CD4-positive, alpha-beta memory T cell (primary cell): ENCODE measurements at regions of chr22 and their contacts with region 1.

Region 1: DNA sequence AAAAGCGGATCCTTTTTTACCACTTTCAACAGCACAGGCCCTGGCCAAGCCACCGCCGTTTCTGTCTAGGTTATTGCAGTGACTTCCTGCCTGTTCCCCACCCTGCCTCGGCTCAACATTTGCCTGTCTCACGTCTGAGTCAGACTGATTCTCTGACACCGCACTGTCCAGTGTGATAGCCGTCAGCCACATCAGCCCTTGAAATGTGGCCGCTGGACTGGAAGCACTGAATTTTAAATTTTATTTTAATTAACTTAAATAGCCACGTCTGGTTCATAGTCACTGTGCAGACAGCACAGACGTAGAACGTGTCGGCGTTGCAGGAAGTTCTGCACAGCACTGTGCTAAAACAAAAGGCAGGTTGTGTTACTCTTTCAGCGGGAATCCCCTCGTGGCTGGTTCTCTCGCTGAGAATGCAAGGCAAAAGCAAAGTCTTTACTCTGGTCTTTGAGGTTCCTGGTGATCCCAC is 56.3 kb upstream of the ADSL start:
- DNase-seq: peak; percentile 69 to 89 (median 75)
- H3K4me3 ChIP-seq: no peak overlapping the region
- H3K4me3 Mint-ChIP-seq: peak overlapping the region; percentile 13 to 86 (median 78)
- H3K27ac ChIP-seq: peak overlapping the region; percentile 91
- H3K27ac Mint-ChIP-seq: peak overlapping the region; percentile 95 to 99 (median 97)
- H3K4me1 ChIP-seq: peaks cover 66% of the 10 kb centered on the region
- H3K4me1 Mint-ChIP-seq: peaks cover 43 to 73% (median 58%) of the 10 kb centered on the region in 4 donors
- H3K27me3 ChIP-seq: no peaks in the 10 kb centered on the region
- H3K27me3 Mint-ChIP-seq: no peaks in the 10 kb centered on the region

Region 2: DNA sequence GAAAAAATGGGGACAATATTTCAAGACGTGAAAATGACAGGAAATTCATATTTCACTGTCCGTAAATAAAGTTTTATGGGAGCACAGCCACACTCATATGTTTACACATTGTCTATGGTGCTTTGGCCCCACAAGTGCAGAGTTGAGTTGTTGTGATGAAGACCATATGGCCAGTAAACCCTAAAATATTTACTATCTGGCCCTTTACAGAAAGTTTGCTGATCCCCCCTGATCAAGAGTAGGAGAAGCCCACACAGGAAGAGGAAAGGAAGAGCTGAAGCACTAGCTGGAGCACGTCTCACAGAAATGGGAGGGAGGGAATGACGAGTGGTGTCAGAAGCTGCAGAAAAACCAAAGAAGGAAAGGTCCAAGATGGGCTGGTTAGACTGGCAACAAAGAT is 33.5 kb before region 1 on chr22:
- CTCF ChIA-PET with region 1: no interaction called
- POLR2A ChIA-PET with region 1: no interaction called
- intact Hi-C with region 1: no loop called
- DNase-seq: no peak
- H3K4me3 ChIP-seq: no peak overlapping the region
- H3K4me3 Mint-ChIP-seq: peak overlapping the region in 5 of 8 donors; percentile 1 to 66 (median 35)
- H3K27ac ChIP-seq: no peak overlapping the region
- H3K27ac Mint-ChIP-seq: peak overlapping the region; percentile 65 to 92 (median 86)
- H3K4me1 ChIP-seq: peaks cover 79% of the 10 kb centered on the region
- H3K4me1 Mint-ChIP-seq: peaks cover 57 to 78% (median 73%) of the 10 kb centered on the region in 4 donors
- H3K27me3 ChIP-seq: no peaks in the 10 kb centered on the region
- H3K27me3 Mint-ChIP-seq: no peaks in the 10 kb centered on the region

Region 3: GRCh38 chr22:40276996-40277823 is 12.8 kb before region 1 on chr22:
- CTCF ChIA-PET with region 1: no interaction called
- POLR2A ChIA-PET with region 1: interaction called, 15 read pairs
- intact Hi-C with region 1: loop called (anchors 2 kb)
- DNase-seq: no peak
- H3K4me3 ChIP-seq: no peak overlapping the region
- H3K4me3 Mint-ChIP-seq: peak overlapping the region in 4 of 8 donors; percentile 22 to 98 (median 30)
- H3K27ac ChIP-seq: peak overlapping the region; percentile 66
- H3K27ac Mint-ChIP-seq: peak overlapping the region; percentile 31 to 99 (median 84)
- H3K4me1 ChIP-seq: peaks cover 53% of the 10 kb centered on the region
- H3K4me1 Mint-ChIP-seq: peaks cover 25 to 73% (median 51%) of the 10 kb centered on the region in 4 donors
- H3K27me3 ChIP-seq: no peaks in the 10 kb centered on the region
- H3K27me3 Mint-ChIP-seq: no peaks in the 10 kb centered on the region

Region 4: GRCh38 chr22:40326905-40327735 is 37.1 kb after region 1 on chr22:
- CTCF ChIA-PET with region 1: no interaction called
- POLR2A ChIA-PET with region 1: interaction called, 11 read pairs
- intact Hi-C with region 1: loop called (anchors 2 kb)
- DNase-seq: peak in 4 of 5 donors; percentile 29 to 80 (median 47)
- H3K4me3 ChIP-seq: no peak overlapping the region
- H3K4me3 Mint-ChIP-seq: peak overlapping the region; percentile 51 to 82 (median 56)
- H3K27ac ChIP-seq: peak overlapping the region; percentile 34
- H3K27ac Mint-ChIP-seq: peak overlapping the region; percentile 79 to 98 (median 94)
- H3K4me1 ChIP-seq: peaks cover 98% of the 10 kb centered on the region
- H3K4me1 Mint-ChIP-seq: peaks cover 69 to 100% (median 88%) of the 10 kb centered on the region in 4 donors
- H3K27me3 ChIP-seq: no peaks in the 10 kb centered on the region
- H3K27me3 Mint-ChIP-seq: no peaks in the 10 kb centered on the region

Region 5: DNA sequence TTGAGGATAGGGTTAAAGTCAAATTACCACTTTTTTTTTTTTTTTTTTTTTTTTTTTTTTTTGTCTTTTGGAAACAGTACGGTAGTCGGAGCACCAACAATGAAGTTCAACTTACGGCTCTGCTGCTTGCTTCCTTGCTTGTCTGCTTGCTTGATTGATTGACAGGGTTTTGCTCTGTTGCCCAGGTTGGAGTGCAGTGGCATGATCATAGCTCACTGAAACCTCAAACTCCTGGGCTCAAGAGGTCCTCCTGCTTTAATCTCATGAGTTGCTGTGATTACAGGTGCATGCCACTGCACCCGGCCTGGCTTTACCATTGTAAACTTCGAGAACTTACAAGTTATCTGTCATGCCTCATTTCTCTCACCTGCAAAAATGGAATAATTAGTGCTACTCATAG is 86.1 kb after region 1 on chr22:
- CTCF ChIA-PET with region 1: no interaction called
- POLR2A ChIA-PET with region 1: no interaction called
- intact Hi-C with region 1: no loop called
- DNase-seq: no peak
- H3K4me3 ChIP-seq: no peak overlapping the region
- H3K4me3 Mint-ChIP-seq: no peak overlapping the region
- H3K27ac ChIP-seq: no peak overlapping the region
- H3K27ac Mint-ChIP-seq: no peak overlapping the region
- H3K4me1 ChIP-seq: peaks cover 22% of the 10 kb centered on the region
- H3K4me1 Mint-ChIP-seq: peaks cover 30 to 41% (median 37%) of the 10 kb centered on the region in 4 donors
- H3K27me3 ChIP-seq: no peaks in the 10 kb centered on the region
- H3K27me3 Mint-ChIP-seq: no peaks in the 10 kb centered on the region